GM13977 (cell line): ENCODE measurements at regions of chr7 and their contacts with region 1.

Region 1: GRCh38 chr7:138738551-138739335 is 37.6 kb upstream of the SVOPL start:
- DNase-seq: peak; percentile 81
- CTCF ChIP-seq: peak; percentile 94

Region 2: DNA sequence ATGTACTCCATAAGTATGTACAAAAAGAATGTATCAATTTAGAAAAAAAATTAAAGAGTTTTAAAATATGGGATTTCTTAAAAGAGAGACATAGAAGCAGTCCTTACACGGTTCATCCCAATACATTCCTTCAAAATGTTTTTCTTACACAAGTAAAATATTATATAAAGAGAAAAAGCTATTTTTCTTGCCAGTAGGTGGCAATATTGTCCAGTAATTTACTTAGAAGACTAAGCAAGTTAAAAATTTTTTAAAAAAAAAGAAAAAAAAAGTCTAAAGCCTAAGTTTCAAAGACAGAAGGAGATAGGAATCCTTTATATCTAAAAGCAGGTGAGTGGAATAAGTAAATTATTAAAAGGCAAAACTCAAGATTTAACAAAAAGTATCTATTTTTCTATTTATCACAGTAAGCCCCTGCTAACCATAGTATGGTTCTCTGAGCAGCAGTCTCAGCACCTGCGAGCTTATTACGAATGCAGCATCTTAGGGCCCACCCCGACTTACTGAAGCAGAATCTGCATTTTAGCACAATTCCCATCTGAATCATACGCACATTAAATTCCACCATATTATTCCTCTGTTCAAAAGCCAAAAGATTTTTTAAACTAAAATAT is 1132.6 kb before region 1 on chr7:
- in situ Hi-C with region 1: loop called (anchors 25 kb)
- DNase-seq: peak; percentile 10
- CTCF ChIP-seq: peak; percentile 37

Region 3: DNA sequence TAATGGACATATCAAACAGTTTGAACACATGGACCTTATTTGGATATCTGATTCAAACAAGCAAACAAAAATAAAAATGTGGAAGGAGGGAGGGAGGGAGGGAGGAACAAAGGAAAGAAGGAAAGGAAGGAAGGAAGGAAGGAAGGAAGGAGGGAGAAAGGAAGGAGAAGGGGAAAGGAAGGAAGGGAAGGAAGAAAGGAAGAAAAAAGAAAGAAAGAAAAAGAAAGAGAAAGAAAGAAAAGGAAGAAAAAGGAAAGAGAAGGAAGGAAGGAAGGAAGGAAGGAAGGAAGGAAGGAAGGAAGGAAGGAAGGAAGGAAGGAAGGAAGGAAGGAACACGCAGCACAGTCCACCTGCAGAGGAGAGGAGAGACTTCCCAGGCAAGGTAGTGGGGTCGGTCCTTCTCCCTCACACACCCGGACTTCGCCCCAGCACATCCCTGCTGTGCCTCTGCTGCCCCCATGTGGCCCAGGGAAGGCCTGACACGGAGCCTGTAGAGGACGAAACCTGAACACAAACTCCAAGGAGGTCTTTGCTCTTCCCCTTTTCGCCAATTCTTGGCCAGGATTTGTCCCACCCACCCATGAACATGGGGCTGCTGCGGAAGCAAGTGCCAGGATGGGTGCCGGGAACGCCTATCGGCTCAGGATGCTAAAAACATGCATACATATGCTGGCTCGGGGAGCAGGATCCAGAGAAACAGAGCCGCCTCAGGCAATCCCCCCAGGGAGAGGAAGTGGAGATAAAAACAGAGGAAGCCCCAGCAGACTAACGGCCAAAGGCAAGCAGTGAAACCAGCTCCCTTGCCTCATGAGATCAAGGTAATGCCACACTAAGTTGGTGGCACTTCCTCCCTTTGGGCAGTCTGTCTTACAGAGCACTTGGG is 839.7 kb before region 1 on chr7:
- in situ Hi-C with region 1: loop called (anchors 25 kb)
- DNase-seq: peak; percentile 68
- CTCF ChIP-seq: peak; percentile 98

Region 4: GRCh38 chr7:138161600-138162081 is 577.1 kb before region 1 on chr7:
- in situ Hi-C with region 1: loop called (anchors 25 kb)
- DNase-seq: peak; percentile 90
- CTCF ChIP-seq: peak; percentile 77

Region 5: DNA sequence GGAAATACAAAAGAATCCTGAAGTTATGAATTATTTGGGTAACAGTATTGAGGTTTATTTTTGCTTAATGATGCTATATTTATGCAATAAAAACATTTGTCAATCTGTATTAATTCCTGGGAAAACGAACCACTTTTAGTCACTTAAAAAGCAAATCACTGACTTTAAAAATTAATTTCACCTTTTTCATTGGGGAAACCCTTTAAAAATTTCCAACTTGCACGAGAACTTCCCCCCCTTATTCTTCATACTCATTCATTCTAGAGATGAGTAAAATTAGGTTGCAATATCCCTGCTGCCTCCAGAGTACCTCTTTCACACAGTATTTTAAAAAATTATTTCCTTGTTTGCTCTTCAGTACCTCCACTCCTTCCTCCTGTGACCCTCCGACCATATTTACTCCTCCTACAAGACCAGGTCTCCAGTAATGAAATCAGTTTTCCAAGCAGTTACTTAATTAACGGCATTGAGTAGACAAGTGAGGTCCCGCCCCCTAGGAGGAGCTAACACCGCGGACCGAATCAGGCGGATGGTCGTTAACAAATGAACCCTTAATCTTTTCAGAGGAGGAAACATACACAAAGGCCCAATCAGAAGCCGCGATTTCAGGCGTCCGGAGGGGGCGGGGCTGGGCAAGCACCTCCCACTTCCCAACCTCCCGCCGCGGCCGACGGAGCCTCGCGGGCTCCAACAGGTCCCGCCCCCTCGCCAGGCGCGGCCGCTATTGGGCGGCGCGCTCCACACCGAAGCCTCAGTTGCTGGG is 279.1 kb before region 1 on chr7:
- in situ Hi-C with region 1: loop called (anchors 25 kb)
- DNase-seq: peak; percentile 97
- CTCF ChIP-seq: no peak